Activated T-helper 1 cell treated with anti-CD3 and anti-CD28 coated beads, Interleukin-12 subunit alpha, Interleukin-12 subunit beta, Interleukin-2, Interleukin-4 antibody, amounts not matched to agents 30 ng/mL and 10 ng/mL and 1 ng/mL, durations not matched to agents 14 hours and 24 hours and 36 hours (primary cell): ENCODE measurements at regions of chr21 and their contacts with region 1.

Region 1: GRCh38 chr21:36989699-36990507 is 16.6 kb upstream of the RIPPLY3 start:
- DNase-seq: peak; percentile 87
- H3K4me3 Mint-ChIP-seq: peak overlapping the region; percentile 87
- H3K27ac Mint-ChIP-seq: peak overlapping the region; percentile 96
- H3K4me1 Mint-ChIP-seq: peaks cover 37% of the 10 kb centered on the region
- H3K27me3 Mint-ChIP-seq: no peaks in the 10 kb centered on the region

Region 2: GRCh38 chr21:36135391-36136102 is 854.4 kb before region 1 on chr21:
- intact Hi-C with region 1: loop called (anchors 10 kb)
- DNase-seq: peak; percentile 68
- H3K4me3 Mint-ChIP-seq: peak overlapping the region; percentile 94
- H3K27ac Mint-ChIP-seq: peak overlapping the region; percentile 94
- H3K4me1 Mint-ChIP-seq: peaks cover 22% of the 10 kb centered on the region
- H3K27me3 Mint-ChIP-seq: peaks cover 5% of the 10 kb centered on the region

Region 3: GRCh38 chr21:36934864-36935420 is 55.0 kb before region 1 on chr21:
- intact Hi-C with region 1: loop called (anchors 1 kb)
- DNase-seq: no peak
- H3K4me3 Mint-ChIP-seq: no peak overlapping the region
- H3K27ac Mint-ChIP-seq: no peak overlapping the region
- H3K4me1 Mint-ChIP-seq: peaks cover 4% of the 10 kb centered on the region
- H3K27me3 Mint-ChIP-seq: no peaks in the 10 kb centered on the region

Region 4: GRCh38 chr21:36966066-36966820 is 23.7 kb before region 1 on chr21 and contains the start of gene HLCS:
- intact Hi-C with region 1: loop called (anchors 1 kb)
- DNase-seq: peak; percentile 69
- H3K4me3 Mint-ChIP-seq: peak within 1 kb of the TSS; percentile 93
- H3K27ac Mint-ChIP-seq: peak within 1 kb of the TSS; percentile 90
- H3K4me1 Mint-ChIP-seq: peaks cover 22% of the 10 kb centered on the region
- H3K27me3 Mint-ChIP-seq: no peaks in the 10 kb centered on the region
- total RNA-seq, gene HLCS: 12.6 and 15.8 TPM in 2 replicates

Region 5: DNA sequence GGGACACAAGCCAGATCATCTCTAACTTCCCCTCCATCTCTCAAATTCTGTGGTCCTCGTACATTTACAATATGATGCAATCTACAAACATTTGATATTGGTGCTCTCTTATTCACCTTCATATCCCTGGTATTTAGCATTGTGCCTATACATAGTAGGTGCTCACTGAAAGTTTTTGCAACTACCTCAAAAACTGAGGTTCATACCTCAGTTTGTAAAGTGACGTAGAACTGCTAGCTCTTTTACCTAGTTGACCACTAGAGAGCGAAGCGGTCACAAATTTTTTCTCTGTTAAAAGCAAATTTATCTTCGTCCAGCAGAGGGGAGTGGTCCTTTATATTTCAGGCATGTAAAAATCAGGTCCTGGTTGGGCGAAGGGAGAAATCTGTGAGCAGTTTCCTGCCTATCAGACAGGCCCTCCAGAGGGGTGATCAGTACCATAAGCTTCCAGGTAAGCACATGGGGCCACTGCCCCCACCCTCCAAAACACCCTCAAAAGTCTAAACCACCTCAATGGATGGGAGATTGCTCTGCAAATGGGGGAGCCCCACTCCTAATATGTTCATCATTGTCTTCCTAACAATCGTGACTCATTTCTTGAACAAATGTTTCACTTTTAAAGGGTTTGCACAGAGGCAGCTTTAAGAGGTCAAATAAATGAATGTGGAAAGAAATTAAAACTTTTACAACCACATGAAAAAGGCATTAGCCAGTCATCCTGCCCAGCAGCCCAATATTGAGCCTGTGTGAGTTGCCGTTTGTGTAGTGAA is 12.8 kb before region 1 on chr21:
- intact Hi-C with region 1: loop called (anchors 1 kb)
- DNase-seq: no peak
- H3K4me3 Mint-ChIP-seq: no peak overlapping the region
- H3K27ac Mint-ChIP-seq: peak overlapping the region; percentile 8
- H3K4me1 Mint-ChIP-seq: peaks cover 23% of the 10 kb centered on the region
- H3K27me3 Mint-ChIP-seq: peaks cover 5% of the 10 kb centered on the region

Region 6: GRCh38 chr21:37032877-37033471 is 43.1 kb after region 1 on chr21:
- intact Hi-C with region 1: no loop called
- DNase-seq: no peak
- H3K4me3 Mint-ChIP-seq: no peak overlapping the region
- H3K27ac Mint-ChIP-seq: no peak overlapping the region
- H3K4me1 Mint-ChIP-seq: no peaks in the 10 kb centered on the region
- H3K27me3 Mint-ChIP-seq: peaks cover 3% of the 10 kb centered on the region

Region 7: DNA sequence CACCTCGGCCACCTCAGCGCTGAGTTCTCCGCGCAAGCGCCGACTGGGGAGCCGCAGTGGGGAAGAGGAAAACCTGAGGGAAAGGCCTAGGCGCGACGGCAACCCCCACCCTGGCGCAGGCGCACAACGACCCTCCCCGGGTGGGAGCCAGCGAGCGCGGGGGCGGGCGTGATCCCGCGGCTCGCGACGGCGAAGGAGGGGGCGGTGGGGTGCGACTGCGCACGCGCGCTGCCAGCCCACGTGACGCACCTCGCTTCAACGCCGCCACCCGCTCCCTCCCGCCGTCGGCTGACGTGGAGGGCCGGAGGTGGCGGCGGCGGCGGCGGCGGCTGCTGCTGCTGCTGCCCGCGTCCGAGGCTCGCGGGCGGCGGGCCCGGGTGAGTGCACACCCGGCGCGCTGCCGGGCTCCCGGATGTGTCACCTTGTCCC is 83.1 kb after region 1 on chr21 and contains the starts of genes PIGP and TTC3:
- intact Hi-C with region 1: loop called (anchors 1 kb)
- DNase-seq: peak; percentile 93
- H3K4me3 Mint-ChIP-seq: peak within 1 kb of the TSS; percentile 95
- H3K27ac Mint-ChIP-seq: peak within 1 kb of the TSS; percentile 95
- H3K4me1 Mint-ChIP-seq: peaks cover 50% of the 10 kb centered on the region
- H3K27me3 Mint-ChIP-seq: peaks cover 2% of the 10 kb centered on the region
- total RNA-seq, gene PIGP: 18.2 and 20.1 TPM in 2 replicates
- total RNA-seq, gene TTC3: 61.8 and 69.3 TPM in 2 replicates

Region 8: DNA sequence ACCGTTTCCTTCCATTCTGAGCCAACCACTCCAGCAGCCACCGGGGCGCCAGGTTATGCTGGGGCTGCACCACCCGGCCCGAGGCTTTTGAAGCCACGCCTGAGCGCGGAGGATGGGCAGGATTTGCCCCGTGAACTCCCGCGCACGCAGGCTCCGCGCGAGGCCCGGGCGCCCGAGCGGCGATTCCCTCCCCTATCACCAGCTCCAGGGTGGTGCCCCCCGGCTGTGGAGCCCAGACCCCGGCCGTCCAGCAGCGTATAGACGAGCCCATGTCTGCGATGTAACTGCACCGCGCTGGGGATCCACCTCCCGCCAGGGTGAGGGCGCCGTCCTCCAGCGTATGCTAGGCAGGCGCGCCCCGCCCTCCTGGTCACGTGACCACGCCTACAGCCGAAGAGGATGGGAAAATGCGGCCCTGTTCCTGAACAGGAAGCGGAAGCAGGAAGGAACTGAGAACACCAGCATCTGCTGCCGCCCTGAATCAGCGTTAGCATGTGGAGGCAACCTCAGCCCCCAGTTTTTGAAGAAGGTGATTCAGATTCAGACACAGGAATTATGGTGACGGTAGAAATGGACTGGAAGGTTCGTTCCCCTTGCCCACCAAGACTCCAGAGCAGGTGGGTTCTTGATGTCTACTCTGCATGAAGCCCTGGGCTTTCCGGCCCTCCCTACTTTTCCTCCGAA is 231.2 kb after region 1 on chr21:
- intact Hi-C with region 1: loop called (anchors 5 kb)
- DNase-seq: peak; percentile 89
- H3K4me3 Mint-ChIP-seq: peak overlapping the region; percentile 90
- H3K27ac Mint-ChIP-seq: peak overlapping the region; percentile 91
- H3K4me1 Mint-ChIP-seq: peaks cover 48% of the 10 kb centered on the region
- H3K27me3 Mint-ChIP-seq: peaks cover 1% of the 10 kb centered on the region

Region 9: GRCh38 chr21:37231246-37231645 is 241.3 kb after region 1 on chr21:
- intact Hi-C with region 1: no loop called
- DNase-seq: no peak
- H3K4me3 Mint-ChIP-seq: no peak overlapping the region
- H3K27ac Mint-ChIP-seq: no peak overlapping the region
- H3K4me1 Mint-ChIP-seq: no peaks in the 10 kb centered on the region
- H3K27me3 Mint-ChIP-seq: no peaks in the 10 kb centered on the region